PC-9 (cell line): ENCODE measurements at regions of chr7 and their contacts with region 1.

Region 1: DNA sequence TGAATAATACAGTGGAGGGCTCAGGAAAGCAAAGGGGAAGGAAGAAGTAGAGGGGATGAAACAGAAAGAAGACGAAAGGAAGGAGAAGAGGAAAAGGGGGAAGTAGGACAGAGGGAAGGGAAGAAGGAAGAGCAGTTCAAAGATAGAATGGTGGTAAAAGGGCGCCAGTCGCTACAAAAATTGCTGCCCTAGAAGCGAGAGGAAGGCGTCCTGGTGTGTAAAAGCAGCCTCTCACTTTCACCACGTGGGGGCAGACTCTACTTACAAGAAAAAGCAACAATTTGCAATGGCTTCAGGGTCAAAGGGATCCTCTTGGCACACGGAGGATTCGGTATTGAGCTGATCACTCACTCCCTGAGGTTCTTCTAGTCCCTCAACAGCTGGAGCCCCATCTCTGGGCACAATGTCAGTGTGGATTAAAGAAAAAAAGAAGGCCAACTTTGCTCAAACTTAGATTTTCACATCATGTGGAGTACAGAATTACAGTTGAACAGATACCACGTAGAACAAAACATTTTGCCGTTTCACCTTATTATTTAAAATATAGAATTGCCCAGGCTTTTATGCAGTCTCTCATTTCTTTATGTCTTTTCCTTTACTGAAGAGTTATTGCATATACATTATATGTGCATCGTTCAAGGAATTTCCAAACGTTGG is 31.4 kb upstream of the NPVF start:
- DNase-seq: peak; percentile 39 to 62
- H3K4me3 ChIP-seq: no peak overlapping the region
- H3K27ac ChIP-seq: no peak overlapping the region
- H3K4me1 ChIP-seq: peaks cover 9% of the 10 kb centered on the region; the same call in 1 of the 2 replicates
- H3K27me3 ChIP-seq: peaks cover 60% of the 10 kb centered on the region
- CTCF ChIP-seq: peak; percentile 87

Region 2: GRCh38 chr7:25389489-25390106 is 129.9 kb after region 1 on chr7:
- CTCF ChIA-PET with region 1: no interaction called
- POLR2A ChIA-PET with region 1: no interaction called
- intact Hi-C with region 1: loop called (anchors 1 kb)
- DNase-seq: peak in 1 of 2 experiments; percentile 48
- H3K4me3 ChIP-seq: no peak overlapping the region
- H3K27ac ChIP-seq: no peak overlapping the region
- H3K4me1 ChIP-seq: no peaks in the 10 kb centered on the region
- H3K27me3 ChIP-seq: peaks cover 78% of the 10 kb centered on the region
- CTCF ChIP-seq: peak; percentile 69

Region 3: GRCh38 chr7:25565949-25566348 is 306.2 kb after region 1 on chr7:
- CTCF ChIA-PET with region 1: no interaction called
- POLR2A ChIA-PET with region 1: no interaction called
- intact Hi-C with region 1: loop called (anchors 1 kb)
- DNase-seq: peak; percentile 66 to 67
- H3K4me3 ChIP-seq: no peak overlapping the region
- H3K27ac ChIP-seq: no peak overlapping the region
- H3K4me1 ChIP-seq: no peaks in the 10 kb centered on the region
- H3K27me3 ChIP-seq: peaks cover 45% of the 10 kb centered on the region
- CTCF ChIP-seq: peak; percentile 100

Region 4: GRCh38 chr7:25851332-25852210 is 591.9 kb after region 1 on chr7:
- CTCF ChIA-PET with region 1: interaction called, 4 read pairs
- POLR2A ChIA-PET with region 1: no interaction called
- intact Hi-C with region 1: loop called (anchors 1 kb)
- DNase-seq: peak; percentile 58 to 65
- H3K4me3 ChIP-seq: no peak overlapping the region
- H3K27ac ChIP-seq: no peak overlapping the region
- H3K4me1 ChIP-seq: peaks cover 42% of the 10 kb centered on the region
- H3K27me3 ChIP-seq: peaks cover 27% of the 10 kb centered on the region
- CTCF ChIP-seq: peak; percentile 92